GM10248 (cell line): ENCODE measurements at regions of chr6 and their contacts with region 1.

Region 1: GRCh38 chr6:75579951-75580350 is 21.7 kb upstream of the SENP6 start:
- DNase-seq: peak; percentile 19
- CTCF ChIP-seq: no peak

Region 2: DNA sequence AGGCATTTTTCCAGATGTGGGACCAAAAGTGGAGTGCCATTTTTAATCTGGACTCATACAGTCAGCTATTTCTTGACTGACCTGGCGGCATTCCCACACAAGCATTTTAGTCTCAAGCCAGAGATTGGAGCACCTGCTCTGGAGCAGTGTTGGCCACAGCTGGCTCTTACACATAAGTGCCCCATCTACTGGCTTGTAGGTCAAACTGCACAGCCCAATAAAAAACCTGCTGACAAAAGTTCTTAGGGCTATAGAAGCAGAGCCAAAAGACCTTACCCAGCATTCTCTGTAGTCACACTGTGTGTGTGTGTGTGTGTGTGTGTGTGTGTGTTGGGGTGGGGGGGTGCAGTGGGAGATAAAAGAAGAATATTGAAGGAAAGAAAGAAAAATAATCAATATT is 16.9 kb before region 1 on chr6:
- CTCF ChIA-PET with region 1: interaction called, 13 read pairs
- POLR2A ChIA-PET with region 1: no interaction called
- DNase-seq: no peak
- CTCF ChIP-seq: peak; percentile 21